Mammary epithelial cell (primary cell): ENCODE measurements at regions of chr4 and their contacts with region 1.

Region 1: DNA sequence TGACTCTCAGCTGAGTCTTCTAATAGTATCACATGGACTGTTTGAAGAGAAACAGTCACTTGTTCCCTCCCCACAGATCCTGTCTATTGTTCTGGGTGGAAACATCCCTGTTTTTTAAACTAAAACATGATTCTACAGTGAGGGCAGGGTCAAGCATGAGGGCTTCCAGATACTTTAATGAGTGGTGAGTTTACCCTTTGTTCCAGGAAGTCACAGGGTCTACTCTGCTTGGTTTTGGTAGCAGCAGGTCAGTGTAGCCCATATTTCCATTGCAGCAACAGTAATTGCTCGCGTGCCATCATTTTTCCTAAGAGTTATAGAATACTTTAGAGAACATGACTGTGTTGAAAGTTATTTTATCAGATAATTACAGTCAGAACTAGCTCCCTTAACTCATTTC is 87.4 kb downstream of the ZNF732 start:
- DNase-seq: no peak
- H3K4me3 ChIP-seq: no peak overlapping the region
- H3K27ac ChIP-seq: no peak overlapping the region
- H3K4me1 ChIP-seq: no peaks in the 10 kb centered on the region
- H3K27me3 ChIP-seq: no peaks in the 10 kb centered on the region
- CTCF ChIP-seq: no peak

Region 2: DNA sequence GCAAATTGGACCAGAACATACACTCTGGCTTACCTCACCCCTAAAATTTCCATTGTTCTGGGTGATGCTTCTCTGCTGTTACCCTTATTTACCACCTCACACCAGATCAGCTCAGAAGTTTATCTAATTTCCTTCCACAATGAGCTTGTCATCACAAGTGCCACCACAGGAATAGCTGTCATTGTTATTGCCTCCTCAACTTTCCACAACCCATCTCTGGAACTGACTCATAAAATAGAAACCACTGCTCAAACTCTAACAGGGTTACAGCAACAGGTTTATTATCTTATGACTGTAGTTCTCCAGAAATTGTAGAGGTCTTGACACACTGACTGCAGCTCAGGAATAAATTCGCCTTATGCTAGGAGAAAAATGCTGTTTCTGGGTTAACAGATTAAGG is 40.9 kb before region 1 on chr4:
- CTCF ChIA-PET with region 1: no interaction called
- dilution Hi-C with region 1: loop called (anchors 5 kb)
- in situ Hi-C with region 1: no loop called
- intact Hi-C with region 1: no loop called
- DNase-seq: no peak
- H3K4me3 ChIP-seq: no peak overlapping the region
- H3K27ac ChIP-seq: no peak overlapping the region
- H3K4me1 ChIP-seq: no peaks in the 10 kb centered on the region
- H3K27me3 ChIP-seq: no peaks in the 10 kb centered on the region
- CTCF ChIP-seq: no peak

Region 3: GRCh38 chr4:508675-509638 is 291.1 kb after region 1 on chr4:
- CTCF ChIA-PET with region 1: no interaction called
- dilution Hi-C with region 1: no loop called
- in situ Hi-C with region 1: no loop called
- intact Hi-C with region 1: no loop called
- DNase-seq: no peak
- H3K4me3 ChIP-seq: no peak overlapping the region
- H3K27ac ChIP-seq: no peak overlapping the region
- H3K4me1 ChIP-seq: no peaks in the 10 kb centered on the region
- H3K27me3 ChIP-seq: no peaks in the 10 kb centered on the region
- CTCF ChIP-seq: no peak

Region 4: GRCh38 chr4:973431-974397 is 755.8 kb after region 1 on chr4 and contains the start of gene DGKQ:
- CTCF ChIA-PET with region 1: no interaction called
- dilution Hi-C with region 1: no loop called
- in situ Hi-C with region 1: no loop called
- intact Hi-C with region 1: no loop called
- DNase-seq: peak; percentile 69
- H3K4me3 ChIP-seq: peak within 1 kb of the TSS; percentile 71 to 86 (median 82)
- H3K27ac ChIP-seq: no peak within 1 kb of the TSS
- H3K4me1 ChIP-seq: peaks cover 25% of the 10 kb centered on the region
- H3K27me3 ChIP-seq: no peaks in the 10 kb centered on the region
- CTCF ChIP-seq: no peak
- total RNA-seq, gene DGKQ: 13.7 to 13.8 TPM